ENCODE measurements at regions of chr14 and their contacts with region 1.

Region 1: GRCh38 chr14:91177073-91178034 is 63.5 kb downstream of the DGLUCY start:
- DNase-seq: peak; percentile 37 to 88 (median 64)
- ATAC-seq: peak; percentile 93
- H3K4me3 ChIP-seq: no peak overlapping the region
- H3K4me3 Mint-ChIP-seq: no peak overlapping the region
- H3K27ac ChIP-seq: peak overlapping the region in 1 of 2 experiments; percentile 52
- H3K27ac Mint-ChIP-seq: peak overlapping the region; percentile 89
- H3K4me1 ChIP-seq: peaks cover 5% of the 10 kb centered on the region
- H3K4me1 Mint-ChIP-seq: peaks cover 12% of the 10 kb centered on the region
- H3K27me3 ChIP-seq: no peaks in the 10 kb centered on the region
- H3K27me3 Mint-ChIP-seq: no peaks in the 10 kb centered on the region
- CTCF ChIP-seq: peak; percentile 89

Region 2: DNA sequence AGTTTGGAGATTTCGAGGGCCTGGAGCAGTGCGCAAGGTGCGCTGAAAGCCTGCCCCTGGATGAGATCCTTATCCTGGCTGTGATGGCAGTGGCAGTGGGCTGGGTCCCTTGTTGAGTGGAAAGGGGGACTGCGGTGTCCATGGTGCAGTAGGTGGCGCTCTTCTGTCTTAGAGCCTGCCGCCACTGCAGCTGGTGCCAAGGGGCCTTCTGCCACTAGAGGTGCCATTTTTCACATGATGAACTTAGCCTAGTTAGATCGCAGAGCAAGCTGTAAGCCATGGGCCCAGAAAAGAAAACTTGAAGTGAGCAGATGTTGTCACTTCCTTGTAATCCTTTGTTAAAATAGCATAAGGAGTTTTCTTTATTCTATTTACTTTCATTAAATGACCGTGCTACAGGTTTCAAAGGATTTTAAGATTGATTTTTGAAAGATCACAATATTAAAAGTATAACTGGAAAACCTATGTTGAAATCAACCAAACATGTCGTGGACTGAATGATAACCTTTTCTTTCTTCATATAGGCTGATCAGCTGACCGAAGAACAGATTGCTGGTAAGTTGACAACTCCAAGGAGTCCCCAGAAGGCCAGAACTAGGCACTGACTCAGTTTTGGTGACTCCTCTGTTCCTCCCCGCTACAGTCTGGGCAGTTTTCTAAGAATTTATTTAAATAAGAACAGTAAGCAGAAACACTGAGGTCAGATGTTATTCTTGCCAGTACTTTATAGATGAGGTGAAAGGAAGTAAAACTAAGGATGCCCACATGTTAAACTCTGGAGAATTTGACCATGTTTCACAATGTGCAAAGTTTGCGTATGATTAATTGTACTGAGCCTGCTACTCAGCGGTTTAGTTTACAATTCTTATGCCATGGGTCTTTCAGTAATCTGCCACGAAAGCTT is 777.6 kb before region 1 on chr14:
- CTCF ChIA-PET with region 1: interaction called, 3 read pairs
- POLR2A ChIA-PET with region 1: no interaction called
- intact Hi-C with region 1: loop called in 1 of 2 experiments (anchors 10 kb)
- DNase-seq: peak; percentile 73 to 95 (median 85)
- ATAC-seq: peak; percentile 47
- H3K4me3 ChIP-seq: peak overlapping the region; percentile 59 to 75
- H3K4me3 Mint-ChIP-seq: peak overlapping the region; percentile 99
- H3K27ac ChIP-seq: peak overlapping the region; percentile 89
- H3K27ac Mint-ChIP-seq: peak overlapping the region; percentile 99
- H3K4me1 ChIP-seq: peaks cover 56% of the 10 kb centered on the region
- H3K4me1 Mint-ChIP-seq: peaks cover 60% of the 10 kb centered on the region
- H3K27me3 ChIP-seq: no peaks in the 10 kb centered on the region
- H3K27me3 Mint-ChIP-seq: no peaks in the 10 kb centered on the region
- CTCF ChIP-seq: peak; percentile 100

Region 3: DNA sequence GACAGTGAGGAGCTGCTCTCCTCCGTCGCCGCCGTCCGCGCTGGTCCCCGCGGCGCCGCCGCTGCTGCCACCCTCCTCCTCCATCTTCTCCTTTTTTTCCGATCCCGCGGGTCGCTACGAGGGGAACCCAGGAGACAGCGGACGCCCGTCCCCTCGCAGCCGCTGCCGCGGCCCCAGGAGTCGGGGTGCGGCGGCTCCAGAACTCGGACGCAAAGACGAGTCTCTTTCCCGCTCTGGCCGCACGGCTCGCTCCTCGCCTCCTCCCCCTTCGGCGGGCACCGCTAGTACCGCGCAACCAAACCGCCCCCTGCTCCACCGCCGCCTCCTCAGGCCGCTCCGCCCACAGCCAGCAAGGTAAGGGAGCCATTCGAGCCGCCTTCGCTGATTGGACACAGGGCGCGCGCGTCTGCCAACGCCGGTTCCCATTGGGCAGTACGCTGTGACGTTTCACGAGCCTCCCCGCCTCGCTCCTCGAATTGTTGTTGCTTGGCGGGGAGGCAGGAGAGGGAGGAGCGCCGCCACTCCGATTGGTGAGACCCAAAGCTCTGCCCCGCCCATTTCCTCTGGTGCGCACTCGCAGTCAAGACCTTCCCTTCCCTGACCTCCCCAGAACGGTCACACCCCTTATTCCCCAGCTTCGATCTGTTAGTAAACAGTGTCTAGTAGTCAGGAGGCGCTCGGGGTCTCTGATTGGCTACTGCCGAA is 116.9 kb before region 1 on chr14 and contains the start of gene RPS6KA5:
- CTCF ChIA-PET with region 1: interaction called, 20 read pairs
- POLR2A ChIA-PET with region 1: interaction called, 3 read pairs
- intact Hi-C with region 1: loop called in 1 of 2 experiments (anchors 1 kb)
- DNase-seq: peak; percentile 99 to 100 (median 100)
- ATAC-seq: peak; percentile 82
- H3K4me3 ChIP-seq: peak within 1 kb of the TSS; percentile 66 to 84
- H3K4me3 Mint-ChIP-seq: peak within 1 kb of the TSS; percentile 81
- H3K27ac ChIP-seq: peak within 1 kb of the TSS; percentile 94 to 96
- H3K27ac Mint-ChIP-seq: peak within 1 kb of the TSS; percentile 35
- H3K4me1 ChIP-seq: peaks cover 38% of the 10 kb centered on the region
- H3K4me1 Mint-ChIP-seq: peaks cover 55% of the 10 kb centered on the region
- H3K27me3 ChIP-seq: no peaks in the 10 kb centered on the region
- H3K27me3 Mint-ChIP-seq: no peaks in the 10 kb centered on the region
- CTCF ChIP-seq: no peak
- total RNA-seq, gene RPS6KA5: 17.7 to 18.3 TPM

Region 4: DNA sequence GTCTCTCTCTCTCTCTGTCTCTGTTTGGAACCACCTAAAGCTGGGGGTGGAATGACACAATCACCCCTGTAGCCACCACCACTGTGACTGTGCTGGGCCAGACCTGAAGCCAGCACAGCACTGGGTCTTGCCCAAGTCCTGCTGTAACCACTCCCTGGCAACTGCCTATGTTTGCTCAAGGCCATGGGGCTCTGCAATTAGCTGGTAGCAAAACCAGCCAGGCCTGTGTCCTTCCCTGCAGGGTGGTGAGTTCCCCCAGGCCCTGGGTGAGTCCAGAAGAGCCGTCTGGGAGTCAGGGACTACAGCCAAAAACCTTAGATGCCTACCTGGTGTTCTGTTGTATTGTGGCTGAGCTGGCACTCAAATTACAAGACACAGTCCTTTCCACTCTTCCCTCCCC is 12.7 kb before region 1 on chr14:
- CTCF ChIA-PET with region 1: interaction called, 14 read pairs
- POLR2A ChIA-PET with region 1: no interaction called
- intact Hi-C with region 1: no loop called
- DNase-seq: no peak
- ATAC-seq: no peak
- H3K4me3 ChIP-seq: no peak overlapping the region
- H3K4me3 Mint-ChIP-seq: no peak overlapping the region
- H3K27ac ChIP-seq: no peak overlapping the region
- H3K27ac Mint-ChIP-seq: no peak overlapping the region
- H3K4me1 ChIP-seq: no peaks in the 10 kb centered on the region
- H3K4me1 Mint-ChIP-seq: no peaks in the 10 kb centered on the region
- H3K27me3 ChIP-seq: no peaks in the 10 kb centered on the region
- H3K27me3 Mint-ChIP-seq: no peaks in the 10 kb centered on the region
- CTCF ChIP-seq: no peak

Region 5: DNA sequence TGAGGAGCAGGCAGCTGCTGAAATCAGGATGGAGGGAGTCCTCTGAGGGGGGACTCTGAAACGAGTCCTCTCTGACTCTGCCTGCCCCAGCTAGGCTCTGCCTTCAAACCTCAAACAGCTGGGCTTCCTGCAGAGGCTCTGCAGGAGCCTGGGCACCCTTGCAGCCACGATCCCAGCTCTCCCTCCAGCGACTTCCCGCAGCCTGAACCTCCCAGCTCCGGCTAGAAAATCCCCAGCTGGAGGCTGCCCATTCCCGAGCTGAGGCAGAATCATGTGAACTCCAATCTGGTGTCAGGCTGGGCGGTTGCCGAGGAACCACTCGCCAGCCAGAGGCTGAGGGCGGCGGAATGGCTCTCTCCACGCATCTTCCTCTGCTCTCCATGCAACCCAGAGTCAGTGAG is 67.1 kb after region 1 on chr14 and contains the start of gene GPR68:
- CTCF ChIA-PET with region 1: interaction called, 14 read pairs
- POLR2A ChIA-PET with region 1: interaction called, 11 read pairs
- intact Hi-C with region 1: loop called in 1 of 2 experiments (anchors 2 kb)
- DNase-seq: peak in 5 of 9 experiments; percentile 38 to 69 (median 48)
- ATAC-seq: no peak
- H3K4me3 ChIP-seq: peak within 1 kb of the TSS; percentile 49 to 56
- H3K4me3 Mint-ChIP-seq: peak within 1 kb of the TSS; percentile 87
- H3K27ac ChIP-seq: peak within 1 kb of the TSS; percentile 68 to 92
- H3K27ac Mint-ChIP-seq: peak within 1 kb of the TSS; percentile 94
- H3K4me1 ChIP-seq: peaks cover 64% of the 10 kb centered on the region
- H3K4me1 Mint-ChIP-seq: peaks cover 89% of the 10 kb centered on the region
- H3K27me3 ChIP-seq: no peaks in the 10 kb centered on the region
- H3K27me3 Mint-ChIP-seq: no peaks in the 10 kb centered on the region
- CTCF ChIP-seq: no peak
- total RNA-seq, gene GPR68: 3.6 to 5.1 TPM

Region 6: GRCh38 chr14:91273885-91274273 is 96.5 kb after region 1 on chr14:
- CTCF ChIA-PET with region 1: interaction called, 400 read pairs
- POLR2A ChIA-PET with region 1: no interaction called
- intact Hi-C with region 1: loop called in 1 of 2 experiments (anchors 5 kb)
- DNase-seq: no peak
- ATAC-seq: no peak
- H3K4me3 ChIP-seq: no peak overlapping the region
- H3K4me3 Mint-ChIP-seq: no peak overlapping the region
- H3K27ac ChIP-seq: no peak overlapping the region
- H3K27ac Mint-ChIP-seq: peak overlapping the region; percentile 60
- H3K4me1 ChIP-seq: no peaks in the 10 kb centered on the region
- H3K4me1 Mint-ChIP-seq: peaks cover 2% of the 10 kb centered on the region
- H3K27me3 ChIP-seq: no peaks in the 10 kb centered on the region
- H3K27me3 Mint-ChIP-seq: no peaks in the 10 kb centered on the region
- CTCF ChIP-seq: no peak

Region 7: DNA sequence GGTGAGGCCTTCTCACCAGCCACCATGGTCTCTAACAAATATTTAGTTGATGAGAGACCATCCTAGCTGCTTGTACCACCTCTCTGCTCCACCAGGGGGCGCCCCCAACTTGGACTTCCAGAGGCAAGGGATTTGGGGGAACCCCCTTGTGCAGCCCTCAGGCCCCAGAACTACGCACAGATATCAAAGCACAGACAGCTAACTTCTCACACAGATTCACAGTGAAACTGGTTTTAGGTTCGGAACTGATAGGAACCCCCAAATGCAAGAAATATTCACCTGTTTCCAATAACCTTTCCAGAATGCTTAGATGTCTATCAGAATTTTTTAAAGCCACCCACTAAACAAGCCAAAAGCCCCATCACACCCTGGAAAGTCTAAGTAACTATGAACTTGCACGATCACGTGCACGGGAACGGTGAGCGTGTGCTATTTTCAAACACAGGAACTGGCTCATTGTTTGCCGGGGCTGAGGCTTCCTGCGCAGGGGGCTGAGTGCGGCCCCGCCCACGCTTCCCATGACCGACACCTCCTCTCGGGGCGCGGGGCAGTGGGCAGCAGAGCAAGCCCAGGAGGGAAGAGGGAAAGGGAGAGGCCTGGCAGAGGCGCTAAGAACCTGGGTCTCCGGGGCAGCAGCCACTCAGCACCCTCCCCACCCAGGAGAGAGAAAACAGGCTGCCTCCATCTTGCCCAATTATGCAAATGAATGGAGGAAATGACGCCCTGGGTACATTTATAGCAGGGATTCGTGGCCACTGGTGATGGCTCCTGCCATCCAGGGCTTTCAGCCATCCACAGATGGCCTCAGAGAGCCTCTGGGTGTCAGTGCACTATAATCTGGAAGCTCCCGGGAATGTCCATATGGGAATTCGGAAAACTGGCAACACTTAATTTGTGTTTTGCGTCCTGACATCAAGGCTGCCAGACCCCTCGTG is 146.6 kb after region 1 on chr14:
- CTCF ChIA-PET with region 1: interaction called, 12 read pairs
- POLR2A ChIA-PET with region 1: no interaction called
- intact Hi-C with region 1: no loop called
- DNase-seq: peak; percentile 89 to 98 (median 94)
- ATAC-seq: peak; percentile 77
- H3K4me3 ChIP-seq: peak overlapping the region; percentile 18 to 33
- H3K4me3 Mint-ChIP-seq: peak overlapping the region; percentile 81
- H3K27ac ChIP-seq: peak overlapping the region; percentile 65 to 95
- H3K27ac Mint-ChIP-seq: peak overlapping the region; percentile 99
- H3K4me1 ChIP-seq: peaks cover 95% of the 10 kb centered on the region
- H3K4me1 Mint-ChIP-seq: peaks cover 84% of the 10 kb centered on the region
- H3K27me3 ChIP-seq: no peaks in the 10 kb centered on the region
- H3K27me3 Mint-ChIP-seq: no peaks in the 10 kb centered on the region
- CTCF ChIP-seq: peak; percentile 89

Region 8: DNA sequence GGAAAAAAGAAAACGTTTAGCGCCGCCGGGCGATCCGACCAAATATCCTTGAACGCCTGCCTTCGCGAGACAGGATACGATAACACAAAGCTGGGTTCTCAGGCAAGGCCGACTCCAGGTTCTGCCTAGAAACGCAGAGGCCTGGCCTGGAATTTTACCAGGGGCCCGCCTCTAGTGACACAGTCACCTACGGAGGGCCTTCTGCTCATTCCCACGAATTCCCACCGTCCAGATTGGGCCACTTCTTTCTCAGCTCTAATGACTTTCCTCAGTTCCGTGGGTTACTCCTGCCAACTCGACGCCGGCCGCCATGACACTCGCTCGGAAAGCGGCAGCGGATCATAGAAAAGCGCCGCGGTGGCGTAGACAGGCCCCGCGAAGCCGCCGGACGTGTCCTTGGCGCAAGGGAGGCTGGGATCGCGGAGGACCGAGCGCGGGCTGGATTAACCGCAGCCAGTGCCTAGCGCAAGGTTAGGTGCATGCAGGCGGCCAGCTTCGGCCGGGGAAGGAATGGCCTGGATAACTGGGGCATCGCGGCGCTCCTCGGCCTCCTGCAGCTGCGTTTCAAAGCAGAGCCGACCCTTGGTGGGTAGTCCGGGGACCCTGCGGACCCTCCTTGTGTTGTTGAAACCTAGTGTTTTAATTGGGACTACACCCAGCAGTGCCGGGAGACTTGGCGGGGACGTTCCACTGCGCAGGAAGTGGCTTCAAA is 862.5 kb after region 1 on chr14 and contains the start of gene TRIP11:
- CTCF ChIA-PET with region 1: no interaction called
- POLR2A ChIA-PET with region 1: no interaction called
- intact Hi-C with region 1: no loop called
- DNase-seq: peak; percentile 93 to 97 (median 95)
- ATAC-seq: peak; percentile 86
- H3K4me3 ChIP-seq: peak within 1 kb of the TSS; percentile 86 to 93
- H3K4me3 Mint-ChIP-seq: peak within 1 kb of the TSS; percentile 95
- H3K27ac ChIP-seq: peak within 1 kb of the TSS; percentile 94 to 96
- H3K27ac Mint-ChIP-seq: peak within 1 kb of the TSS; percentile 100
- H3K4me1 ChIP-seq: peaks cover 34% of the 10 kb centered on the region
- H3K4me1 Mint-ChIP-seq: peaks cover 51% of the 10 kb centered on the region
- H3K27me3 ChIP-seq: no peaks in the 10 kb centered on the region
- H3K27me3 Mint-ChIP-seq: no peaks in the 10 kb centered on the region
- CTCF ChIP-seq: no peak
- total RNA-seq, gene TRIP11: 25.3 to 26.5 TPM